ENCODE measurements at regions of chr20 and their contacts with region 1.

Region 1: GRCh38 chr20:57622579-57623377 is 2.6 kb upstream of the ZBP1 start:
- DNase-seq: peak; percentile 83 to 90
- H3K4me3 ChIP-seq: no peak overlapping the region
- H3K27ac ChIP-seq: no peak overlapping the region
- H3K4me1 ChIP-seq: peaks cover 24% of the 10 kb centered on the region
- H3K27me3 ChIP-seq: no peaks in the 10 kb centered on the region
- CTCF ChIP-seq: peak; percentile 99

Region 2: DNA sequence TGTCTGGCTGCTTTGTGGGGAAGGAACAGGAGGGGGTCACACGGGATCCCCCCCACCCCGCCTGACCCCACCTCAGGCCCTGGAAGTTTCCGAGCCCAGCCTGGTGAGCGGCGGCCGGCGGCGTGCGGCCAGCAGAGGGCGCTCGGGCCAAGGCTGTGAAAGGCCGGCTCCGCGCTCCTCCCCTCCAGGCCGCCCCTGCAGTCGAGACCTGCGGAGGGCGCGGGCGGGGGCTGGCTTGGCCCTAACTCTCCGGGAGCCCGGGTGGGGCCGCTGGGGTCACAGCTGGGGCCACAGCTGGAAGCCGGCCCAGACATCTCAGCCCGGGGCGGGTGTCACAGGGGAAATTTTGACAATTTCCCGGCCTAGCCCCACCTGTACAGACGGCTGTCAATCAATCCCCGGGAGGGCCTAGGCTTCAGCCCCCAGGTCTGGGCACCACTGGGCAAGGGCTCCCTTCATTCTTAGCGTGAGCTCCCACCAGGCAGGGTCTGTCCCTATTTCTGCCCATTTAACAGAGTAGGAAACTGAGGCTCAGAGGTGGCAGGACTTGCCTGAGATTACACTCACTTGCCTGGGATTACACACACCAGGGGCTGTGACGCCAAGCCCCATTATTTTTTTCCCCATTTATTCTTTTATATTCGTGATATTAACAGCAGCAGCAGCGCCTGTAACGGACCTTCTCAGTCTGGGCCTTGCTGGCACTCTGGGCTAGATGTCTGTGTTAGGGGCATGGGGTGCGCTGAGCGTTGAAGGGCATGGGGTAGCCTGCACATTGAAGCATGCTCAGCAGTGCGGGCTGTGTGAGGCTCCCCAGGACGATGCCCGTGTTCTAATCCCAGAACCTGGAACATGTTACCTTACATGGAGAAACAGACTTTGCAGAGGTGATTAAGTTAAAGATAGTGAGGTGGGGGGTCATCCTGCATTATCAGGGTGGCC is 25.5 kb before region 1 on chr20:
- CTCF ChIA-PET with region 1: interaction called, 4 read pairs
- POLR2A ChIA-PET with region 1: no interaction called
- intact Hi-C with region 1: loop called (anchors 2 kb)
- DNase-seq: peak in 1 of 2 experiments; percentile 73
- H3K4me3 ChIP-seq: peak overlapping the region; percentile 43; the same call in 1 of the 2 replicates
- H3K27ac ChIP-seq: no peak overlapping the region
- H3K4me1 ChIP-seq: peaks cover 4% of the 10 kb centered on the region; the same call in 1 of the 2 replicates
- H3K27me3 ChIP-seq: peaks cover 6% of the 10 kb centered on the region; the same call in 1 of the 2 replicates
- CTCF ChIP-seq: peak; percentile 97

Region 3: GRCh38 chr20:57698117-57698866 is 75.5 kb after region 1 on chr20:
- CTCF ChIA-PET with region 1: interaction called, 3 read pairs
- POLR2A ChIA-PET with region 1: no interaction called
- intact Hi-C with region 1: loop called (anchors 1 kb)
- DNase-seq: peak; percentile 92 to 100
- H3K4me3 ChIP-seq: peak overlapping the region; percentile 44; the same call in 1 of the 2 replicates
- H3K27ac ChIP-seq: peak overlapping the region; percentile 96
- H3K4me1 ChIP-seq: peaks cover 96% of the 10 kb centered on the region
- H3K27me3 ChIP-seq: no peaks in the 10 kb centered on the region
- CTCF ChIP-seq: no peak

Region 4: GRCh38 chr20:57810511-57811373 is 188.0 kb after region 1 on chr20:
- CTCF ChIA-PET with region 1: no interaction called
- POLR2A ChIA-PET with region 1: no interaction called
- intact Hi-C with region 1: loop called (anchors 10 kb)
- DNase-seq: peak; percentile 86 to 91
- H3K4me3 ChIP-seq: no peak overlapping the region
- H3K27ac ChIP-seq: peak overlapping the region; percentile 38; the same call in 1 of the 2 replicates
- H3K4me1 ChIP-seq: peaks cover 25% of the 10 kb centered on the region
- H3K27me3 ChIP-seq: no peaks in the 10 kb centered on the region
- CTCF ChIP-seq: no peak

Region 5: GRCh38 chr20:58087193-58087858 is 464.5 kb after region 1 on chr20:
- CTCF ChIA-PET with region 1: interaction called, 4 read pairs
- POLR2A ChIA-PET with region 1: no interaction called
- intact Hi-C with region 1: loop called (anchors 1 kb)
- DNase-seq: peak; percentile 50 to 52
- H3K4me3 ChIP-seq: no peak overlapping the region
- H3K27ac ChIP-seq: no peak overlapping the region
- H3K4me1 ChIP-seq: 0 out of 2 replicates have a peak, but pooled peaks cover 9% of the 10 kb centered on the region
- H3K27me3 ChIP-seq: no peaks in the 10 kb centered on the region
- CTCF ChIP-seq: peak; percentile 95